Esophagus muscularis mucosa (tissue), 4 donors: ENCODE measurements at regions of chr18 and their contacts with region 1.

Region 1: DNA sequence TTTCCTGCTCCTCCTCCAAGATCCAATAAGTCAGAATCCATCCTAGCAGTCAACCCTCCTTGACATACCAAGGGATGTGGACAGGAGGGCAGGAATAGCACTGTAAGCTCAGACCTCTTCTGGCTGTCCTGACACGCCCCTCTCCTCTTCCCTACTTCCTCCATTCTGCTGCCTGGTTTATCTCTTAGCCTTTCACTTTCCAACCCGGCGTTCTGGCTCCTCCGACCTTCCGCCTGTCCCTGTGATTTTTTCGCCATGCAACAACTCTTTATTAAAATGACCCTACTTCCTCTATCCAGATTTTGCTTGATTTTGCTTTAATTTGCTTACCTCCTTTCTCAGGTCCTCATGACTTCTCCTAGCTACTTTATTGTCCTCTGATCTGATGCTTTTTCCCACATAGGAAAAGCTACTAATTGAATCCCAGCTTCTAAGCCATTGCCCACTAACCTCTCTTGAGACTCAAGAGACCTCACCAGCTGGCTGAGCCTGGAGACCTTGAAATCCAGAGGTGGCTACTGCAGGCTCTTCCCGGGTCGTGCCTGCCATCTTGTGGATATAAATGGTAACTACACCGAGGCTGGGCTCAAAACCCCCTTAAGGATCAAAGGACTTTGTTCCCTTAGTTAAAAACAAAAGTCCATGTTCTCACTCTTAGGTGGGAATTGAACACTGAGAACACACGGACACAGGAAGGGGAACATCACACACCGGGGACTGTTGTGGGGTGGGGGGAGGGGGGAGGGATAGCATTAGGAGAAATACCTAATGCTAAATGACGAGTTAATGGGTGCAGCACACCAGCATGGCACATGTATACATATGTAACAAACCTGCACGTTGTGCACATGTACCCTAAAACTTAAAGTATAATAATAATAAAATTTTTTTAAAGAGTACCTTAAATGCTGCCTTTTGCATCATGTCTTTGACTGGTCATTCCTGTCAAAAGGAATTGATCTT is 139.4 kb downstream of the AKAIN1 start:
- DNase-seq: no peak
- H3K4me3 ChIP-seq: no peak overlapping the region
- H3K27ac ChIP-seq: no peak overlapping the region
- H3K4me1 ChIP-seq: no peaks in the 10 kb centered on the region
- H3K27me3 ChIP-seq: peaks cover 0 to 4% (median 0%) of the 10 kb centered on the region in 4 donors
- CTCF ChIP-seq: peak; percentile 35 to 68 (median 45)
- EP300 ChIP-seq: no peak
- POLR2A ChIP-seq: no peak

Region 2: DNA sequence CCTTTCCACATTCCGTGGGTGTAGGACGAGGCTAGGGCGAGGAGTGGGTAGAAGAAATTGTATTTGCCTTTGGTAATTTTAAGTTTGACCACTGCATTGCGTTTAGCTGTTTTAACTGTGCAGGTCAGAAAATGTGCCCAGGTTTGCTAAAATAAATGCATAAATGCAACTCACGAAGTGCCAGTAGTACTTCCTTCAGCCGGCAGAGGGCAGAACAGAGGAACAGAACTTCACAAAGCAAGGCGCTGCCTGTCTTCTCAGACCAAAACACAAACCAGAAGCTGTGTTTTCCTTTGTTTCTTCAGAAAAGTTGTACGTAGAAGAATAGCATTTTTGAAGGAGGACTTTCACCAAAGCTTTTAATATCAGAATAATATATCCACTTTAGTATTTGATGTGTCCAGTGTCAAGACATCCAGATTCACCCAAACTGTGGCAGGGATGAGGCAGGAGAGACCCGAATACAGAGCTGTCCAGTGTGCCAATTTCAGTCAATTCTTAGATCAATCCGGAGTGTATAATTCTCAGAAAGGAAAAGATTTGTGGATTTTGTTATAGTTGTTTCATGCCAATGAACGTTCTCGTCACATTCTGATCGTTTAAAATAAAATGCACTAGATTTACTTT is 951.1 kb before region 1 on chr18:
- intact Hi-C with region 1: loop called (anchors 10 kb)
- DNase-seq: no peak
- H3K4me3 ChIP-seq: peak overlapping the region in 2 of 4 donors; percentile 7 to 30
- H3K27ac ChIP-seq: no peak overlapping the region
- H3K4me1 ChIP-seq: no peaks in the 10 kb centered on the region
- H3K27me3 ChIP-seq: no peaks in the 10 kb centered on the region
- CTCF ChIP-seq: peak; percentile 35 to 70 (median 55)
- EP300 ChIP-seq: no peak
- POLR2A ChIP-seq: no peak

Region 3: GRCh38 chr18:4639628-4640310 is 417.9 kb before region 1 on chr18:
- intact Hi-C with region 1: no loop called
- DNase-seq: no peak
- H3K4me3 ChIP-seq: no peak overlapping the region
- H3K27ac ChIP-seq: no peak overlapping the region
- H3K4me1 ChIP-seq: no peaks in the 10 kb centered on the region
- H3K27me3 ChIP-seq: no peaks in the 10 kb centered on the region
- CTCF ChIP-seq: no peak
- EP300 ChIP-seq: no peak
- POLR2A ChIP-seq: no peak

Region 4: GRCh38 chr18:5110266-5110665 is 52.6 kb after region 1 on chr18:
- intact Hi-C with region 1: loop called (anchors 10 kb)
- DNase-seq: no peak
- H3K4me3 ChIP-seq: no peak overlapping the region
- H3K27ac ChIP-seq: no peak overlapping the region
- H3K4me1 ChIP-seq: no peaks in the 10 kb centered on the region
- H3K27me3 ChIP-seq: no peaks in the 10 kb centered on the region
- CTCF ChIP-seq: no peak
- EP300 ChIP-seq: no peak
- POLR2A ChIP-seq: no peak

Region 5: DNA sequence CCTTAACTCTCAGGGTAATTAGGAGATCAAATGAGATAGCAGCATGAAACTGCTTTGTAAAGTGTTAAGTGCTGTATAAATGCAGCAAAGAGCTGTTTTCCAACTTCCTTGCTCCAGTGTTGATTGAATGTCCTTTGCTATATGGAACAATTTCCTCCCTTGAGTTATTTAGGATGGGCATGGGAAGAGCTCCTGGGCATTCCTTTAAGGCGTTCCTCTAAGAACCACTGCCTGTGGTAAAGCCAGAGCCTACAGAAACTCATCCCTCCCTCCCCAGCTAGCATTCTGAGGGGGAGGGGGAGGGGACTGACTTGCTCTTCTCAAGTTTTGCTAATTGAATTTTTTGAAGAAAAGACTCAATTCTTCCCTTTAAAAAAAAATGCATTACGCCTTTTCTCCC is 138.0 kb after region 1 on chr18:
- intact Hi-C with region 1: no loop called
- DNase-seq: no peak
- H3K4me3 ChIP-seq: no peak overlapping the region
- H3K27ac ChIP-seq: no peak overlapping the region
- H3K4me1 ChIP-seq: peaks cover 0 to 11% (median 11%) of the 10 kb centered on the region in 4 donors
- H3K27me3 ChIP-seq: peaks cover 0 to 66% (median 28%) of the 10 kb centered on the region in 4 donors
- CTCF ChIP-seq: no peak
- EP300 ChIP-seq: no peak
- POLR2A ChIP-seq: no peak